ENCODE measurements at regions of chr14 and their contacts with region 1.

Region 1: GRCh38 chr14:29548948-29549370 is 378.7 kb downstream of the PRKD1 start:
- DNase-seq: peak in 2 of 9 donors; percentile 0
- ATAC-seq: no peak
- H3K4me3 ChIP-seq: no peak overlapping the region
- H3K4me3 Mint-ChIP-seq: no peak overlapping the region
- H3K27ac ChIP-seq: no peak overlapping the region
- H3K27ac Mint-ChIP-seq: no peak overlapping the region
- H3K4me1 ChIP-seq: no peaks in the 10 kb centered on the region
- H3K4me1 Mint-ChIP-seq: no peaks in the 10 kb centered on the region
- H3K27me3 ChIP-seq: no peaks in the 10 kb centered on the region
- H3K27me3 Mint-ChIP-seq: no peaks in the 10 kb centered on the region

Region 2: DNA sequence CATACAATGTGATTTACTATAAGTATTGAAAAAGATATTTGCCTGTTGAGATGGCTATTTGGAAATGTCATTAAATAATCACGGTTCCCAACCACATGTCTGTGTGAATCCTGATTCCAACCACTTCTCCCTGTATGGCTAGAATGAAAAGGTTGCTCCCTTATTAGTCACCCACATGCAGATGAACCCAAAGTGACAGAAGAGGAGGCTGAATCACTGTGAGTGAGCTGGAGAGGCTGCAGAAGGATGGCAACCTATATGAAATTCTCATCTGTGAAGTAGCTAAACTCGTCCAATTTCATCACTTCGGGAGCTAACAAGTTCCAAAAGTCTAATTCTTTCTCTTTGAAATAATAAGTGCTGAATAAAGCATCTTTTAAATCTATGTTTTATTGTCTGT is 78.2 kb after region 1 on chr14:
- CTCF ChIA-PET with region 1: no interaction called
- POLR2A ChIA-PET with region 1: no interaction called
- intact Hi-C with region 1: no loop called
- DNase-seq: no peak
- ATAC-seq: no peak
- H3K4me3 ChIP-seq: no peak overlapping the region
- H3K4me3 Mint-ChIP-seq: no peak overlapping the region
- H3K27ac ChIP-seq: no peak overlapping the region
- H3K27ac Mint-ChIP-seq: no peak overlapping the region
- H3K4me1 ChIP-seq: no peaks in the 10 kb centered on the region
- H3K4me1 Mint-ChIP-seq: no peaks in the 10 kb centered on the region
- H3K27me3 ChIP-seq: no peaks in the 10 kb centered on the region
- H3K27me3 Mint-ChIP-seq: no peaks in the 10 kb centered on the region

Region 3: GRCh38 chr14:30214461-30215090 is 665.6 kb after region 1 on chr14:
- CTCF ChIA-PET with region 1: no interaction called
- POLR2A ChIA-PET with region 1: no interaction called
- intact Hi-C with region 1: loop called in 1 of 2 experiments (anchors 2 kb)
- DNase-seq: no peak
- ATAC-seq: no peak
- H3K4me3 ChIP-seq: no peak overlapping the region
- H3K4me3 Mint-ChIP-seq: no peak overlapping the region
- H3K27ac ChIP-seq: no peak overlapping the region
- H3K27ac Mint-ChIP-seq: no peak overlapping the region
- H3K4me1 ChIP-seq: no peaks in the 10 kb centered on the region
- H3K4me1 Mint-ChIP-seq: no peaks in the 10 kb centered on the region
- H3K27me3 ChIP-seq: no peaks in the 10 kb centered on the region
- H3K27me3 Mint-ChIP-seq: no peaks in the 10 kb centered on the region

Region 4: GRCh38 chr14:30521899-30522736 is 973.2 kb after region 1 on chr14:
- CTCF ChIA-PET with region 1: no interaction called
- POLR2A ChIA-PET with region 1: no interaction called
- intact Hi-C with region 1: loop called (anchors 5 to 10 kb)
- DNase-seq: peak in 6 of 9 donors; percentile 4 to 55 (median 36)
- ATAC-seq: peak; percentile 70
- H3K4me3 ChIP-seq: no peak overlapping the region
- H3K4me3 Mint-ChIP-seq: peak overlapping the region in 7 of 10 donors; percentile 2 to 59 (median 26)
- H3K27ac ChIP-seq: no peak overlapping the region
- H3K27ac Mint-ChIP-seq: peak overlapping the region in 7 of 9 donors; percentile 6 to 78 (median 43)
- H3K4me1 ChIP-seq: peaks cover 4 to 7% of the 10 kb centered on the region in 2 donors
- H3K4me1 Mint-ChIP-seq: peaks cover 2 to 17% (median 11%) of the 10 kb centered on the region in 7 donors
- H3K27me3 ChIP-seq: no peaks in the 10 kb centered on the region
- H3K27me3 Mint-ChIP-seq: no peaks in the 10 kb centered on the region

Measured in naive thymus-derived CD4-positive, alpha-beta T cell (primary cell).